ENCODE measurements at regions of chr6 and their contacts with region 1.

Region 1: GRCh38 chr6:11093589-11094410 is at the start of gene SMIM13:
- DNase-seq: peak; percentile 94
- H3K4me3 Mint-ChIP-seq: peak within 1 kb of the TSS; percentile 92
- H3K27ac Mint-ChIP-seq: peak within 1 kb of the TSS; percentile 97
- H3K4me1 Mint-ChIP-seq: peaks cover 31% of the 10 kb centered on the region
- H3K27me3 Mint-ChIP-seq: no peaks in the 10 kb centered on the region
- total RNA-seq, gene SMIM13: 14.6 and 18.4 TPM in 2 replicates

Region 2: DNA sequence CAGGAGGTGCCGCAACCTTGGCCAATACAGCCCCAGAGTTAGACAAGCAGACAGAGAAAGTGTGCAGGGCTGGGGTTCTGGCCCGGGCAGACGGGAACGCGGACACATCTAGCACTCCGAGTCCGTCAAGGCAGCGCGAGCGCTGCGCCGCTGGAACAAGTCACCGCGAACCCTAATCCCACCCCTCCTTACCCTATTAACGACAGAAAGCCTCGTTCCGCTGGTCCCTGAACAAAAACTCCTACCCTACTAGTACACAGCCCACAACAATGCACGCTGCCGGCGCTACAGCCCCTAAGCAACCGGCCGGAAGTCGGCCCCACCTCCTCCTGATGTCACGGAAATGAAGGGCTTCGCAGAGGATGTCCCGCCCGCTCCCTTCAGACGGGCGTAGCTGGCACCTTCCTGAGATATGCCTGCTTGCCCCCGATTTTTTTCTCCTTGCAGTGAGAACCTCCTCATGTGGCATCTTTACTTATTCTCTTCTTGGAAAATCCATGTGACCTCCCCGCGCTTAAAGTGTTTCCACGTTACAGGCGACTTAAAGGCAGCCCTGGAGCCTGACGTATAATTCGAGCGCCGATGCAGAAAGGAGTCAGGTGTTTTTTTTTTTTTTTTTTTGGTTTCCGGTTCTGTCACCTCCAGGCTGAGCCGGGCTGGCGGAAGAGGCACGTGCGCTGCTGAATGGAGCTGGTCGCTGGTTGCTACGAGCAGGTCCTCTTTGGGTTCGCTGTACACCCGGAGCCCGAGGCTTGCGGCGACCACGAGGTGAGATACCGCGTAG is 399.3 kb before region 1 on chr6 and contains the starts of genes C6orf52 and PAK1IP1:
- intact Hi-C with region 1: loop called (anchors 1 kb)
- DNase-seq: peak; percentile 90
- H3K4me3 Mint-ChIP-seq: peak within 1 kb of the TSS; percentile 91
- H3K27ac Mint-ChIP-seq: peak within 1 kb of the TSS; percentile 99
- H3K4me1 Mint-ChIP-seq: peaks cover 49% of the 10 kb centered on the region
- H3K27me3 Mint-ChIP-seq: peaks cover 3% of the 10 kb centered on the region
- total RNA-seq, gene C6orf52: 3.6 and 6.0 TPM in 2 replicates
- total RNA-seq, gene PAK1IP1: 35.3 and 37.4 TPM in 2 replicates

Region 3: DNA sequence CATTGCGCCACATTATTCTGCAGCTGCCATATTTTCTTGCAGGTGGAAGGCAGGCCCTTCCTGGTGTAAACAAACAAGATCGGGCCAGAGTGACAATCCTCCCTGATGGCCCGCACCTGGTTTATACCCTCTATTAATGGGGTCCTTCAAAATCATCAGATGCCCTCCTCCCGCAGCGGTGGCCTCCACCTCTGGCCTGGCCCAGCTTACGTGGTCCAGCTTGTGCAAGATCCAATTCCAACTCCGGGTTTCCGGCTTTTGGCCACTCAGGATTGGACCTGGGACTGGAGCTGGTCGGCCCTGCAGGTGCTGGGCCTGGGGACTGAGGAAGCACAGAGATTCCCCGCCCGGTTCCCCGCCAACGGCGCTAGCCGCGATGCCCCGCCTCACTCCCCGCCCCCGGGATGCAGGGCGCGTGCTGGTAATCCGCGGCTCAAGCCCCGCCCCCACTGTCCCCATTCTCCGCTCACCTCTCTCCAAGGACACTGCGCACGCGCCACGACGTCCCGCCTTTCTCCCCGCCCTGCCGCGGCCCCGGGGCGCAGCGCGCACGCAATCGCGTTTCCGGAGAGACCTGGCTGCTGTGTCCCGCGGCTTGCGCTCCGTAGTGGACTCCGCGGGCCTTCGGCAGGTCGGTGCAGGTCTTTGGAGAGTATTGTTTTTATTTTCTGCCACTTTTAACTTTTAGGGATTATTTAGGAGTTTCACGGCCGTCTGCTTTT is 346.4 kb before region 1 on chr6 and contains the start of gene TMEM14B:
- intact Hi-C with region 1: loop called (anchors 1 kb)
- DNase-seq: peak; percentile 100
- H3K4me3 Mint-ChIP-seq: peak within 1 kb of the TSS; percentile 93
- H3K27ac Mint-ChIP-seq: peak within 1 kb of the TSS; percentile 94
- H3K4me1 Mint-ChIP-seq: peaks cover 52% of the 10 kb centered on the region
- H3K27me3 Mint-ChIP-seq: no peaks in the 10 kb centered on the region
- total RNA-seq, gene TMEM14B: 82.1 and 83.7 TPM in 2 replicates

Region 4: GRCh38 chr6:11144393-11144851 is 50.6 kb after region 1 on chr6:
- intact Hi-C with region 1: loop called (anchors 1 kb)
- DNase-seq: peak; percentile 65
- H3K4me3 Mint-ChIP-seq: no peak overlapping the region
- H3K27ac Mint-ChIP-seq: no peak overlapping the region
- H3K4me1 Mint-ChIP-seq: peaks cover 16% of the 10 kb centered on the region
- H3K27me3 Mint-ChIP-seq: peaks cover 1% of the 10 kb centered on the region

Region 5: DNA sequence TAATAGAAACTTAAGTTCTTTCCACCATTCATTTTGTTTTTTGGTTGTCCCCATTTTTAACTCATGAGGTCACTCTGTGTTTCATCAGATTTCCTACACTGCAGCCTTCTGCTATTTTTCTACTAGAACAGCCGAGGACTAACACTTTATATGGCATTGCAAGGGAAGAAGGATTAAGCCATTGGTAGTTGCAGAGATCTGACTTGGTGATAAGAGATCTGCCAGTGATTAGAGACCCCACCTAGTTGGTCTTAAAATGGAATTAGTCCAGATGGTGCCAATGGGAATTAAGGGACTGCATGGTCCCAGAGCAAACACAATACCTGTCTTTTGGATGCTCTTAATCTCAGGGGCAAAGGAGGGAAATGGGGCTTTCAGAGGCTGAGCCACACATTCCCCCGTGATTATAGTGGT is 318.2 kb after region 1 on chr6:
- intact Hi-C with region 1: no loop called
- DNase-seq: no peak
- H3K4me3 Mint-ChIP-seq: peak overlapping the region; percentile 25
- H3K27ac Mint-ChIP-seq: peak overlapping the region; percentile 94
- H3K4me1 Mint-ChIP-seq: peaks cover 65% of the 10 kb centered on the region
- H3K27me3 Mint-ChIP-seq: no peaks in the 10 kb centered on the region

Region 6: DNA sequence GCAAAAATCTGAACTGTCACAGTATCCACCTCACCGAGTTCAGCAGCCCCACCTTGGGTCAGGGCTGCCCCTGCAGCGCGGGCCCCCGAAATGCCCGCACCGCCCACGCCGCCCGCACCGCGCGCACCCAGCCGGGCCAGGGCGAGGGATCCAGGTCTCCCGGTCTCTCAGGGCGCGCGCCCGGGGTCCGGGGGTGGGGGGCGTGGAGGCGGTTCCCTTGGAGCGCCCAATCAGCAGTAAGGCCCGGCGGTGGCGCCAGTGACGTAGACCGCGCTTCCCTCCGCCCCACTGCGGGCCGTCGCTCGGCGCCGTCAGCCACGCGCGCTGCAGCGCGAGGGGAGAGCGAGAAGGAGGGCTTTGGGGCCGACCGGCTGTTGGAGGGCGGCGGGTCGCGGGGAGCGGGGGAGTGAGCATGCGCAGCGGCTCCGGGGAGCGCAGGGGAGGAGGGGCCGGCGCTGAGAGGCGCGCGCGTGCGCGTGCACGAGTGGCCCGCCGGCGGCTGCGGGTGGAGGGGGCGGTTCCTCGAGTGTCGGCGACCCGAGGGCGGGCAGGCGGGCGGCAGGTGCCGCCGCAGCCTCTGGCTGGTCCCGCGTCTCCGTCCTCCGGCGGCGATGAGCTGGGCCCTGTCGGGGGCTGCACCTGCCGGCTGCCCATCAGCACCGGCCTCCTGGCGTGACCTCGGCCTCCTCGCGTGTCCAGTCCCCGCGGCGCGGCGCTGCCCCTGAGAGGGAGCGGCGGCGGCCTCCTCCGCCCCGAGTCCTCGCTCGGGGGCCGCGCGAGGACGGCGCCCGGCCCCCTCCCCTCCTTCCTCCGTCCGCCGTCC is 443.6 kb after region 1 on chr6 and contains the start of gene TMEM170B:
- intact Hi-C with region 1: loop called (anchors 1 kb)
- DNase-seq: peak; percentile 90
- H3K4me3 Mint-ChIP-seq: peak within 1 kb of the TSS; percentile 84
- H3K27ac Mint-ChIP-seq: peak within 1 kb of the TSS; percentile 68
- H3K4me1 Mint-ChIP-seq: peaks cover 17% of the 10 kb centered on the region
- H3K27me3 Mint-ChIP-seq: peaks cover 62% of the 10 kb centered on the region
- total RNA-seq, gene TMEM170B: 0.78 and 0.86 TPM in 2 replicates